MCF 10A (cell line): ENCODE measurements at regions of chr20 and their contacts with region 1.

Region 1: DNA sequence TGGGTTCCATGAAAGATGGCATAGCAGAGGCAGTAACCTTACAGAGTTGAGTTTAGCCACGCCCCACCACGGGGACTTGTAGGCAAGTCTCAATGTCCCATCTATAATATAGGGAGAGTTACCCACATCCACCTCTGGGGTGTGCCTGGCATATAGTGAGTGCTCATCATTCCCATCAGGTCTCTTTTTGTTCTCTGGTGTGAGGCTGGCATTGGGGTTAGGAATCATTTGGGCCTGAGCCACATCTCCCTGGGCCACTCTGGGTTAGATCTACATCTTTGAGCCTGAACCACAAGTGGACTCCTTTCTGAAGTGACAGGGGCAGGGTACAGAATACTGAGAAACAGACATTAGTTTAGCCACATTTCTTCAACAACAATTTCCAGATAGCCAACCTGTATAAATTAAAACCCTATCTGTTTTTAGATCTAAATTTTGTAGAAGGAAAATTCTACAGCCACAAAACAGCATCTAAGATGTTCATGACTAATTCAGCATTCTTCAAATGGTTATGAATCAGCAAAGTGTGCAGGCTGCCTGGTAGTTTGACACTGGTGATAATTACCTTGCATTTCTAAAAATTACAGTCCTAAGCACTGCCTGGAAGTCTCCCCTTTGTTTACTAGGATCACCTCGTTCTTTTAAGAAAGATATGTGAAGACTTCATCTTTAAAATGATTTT is 20.1 kb downstream of the RNF24 start:
- DNase-seq: peak; percentile 17
- H3K4me3 Mint-ChIP-seq: no peak overlapping the region
- H3K27ac Mint-ChIP-seq: peak overlapping the region; percentile 27
- H3K4me1 Mint-ChIP-seq: peaks cover 16% of the 10 kb centered on the region
- H3K27me3 Mint-ChIP-seq: no peaks in the 10 kb centered on the region
- CTCF ChIP-seq: no peak

Region 2: DNA sequence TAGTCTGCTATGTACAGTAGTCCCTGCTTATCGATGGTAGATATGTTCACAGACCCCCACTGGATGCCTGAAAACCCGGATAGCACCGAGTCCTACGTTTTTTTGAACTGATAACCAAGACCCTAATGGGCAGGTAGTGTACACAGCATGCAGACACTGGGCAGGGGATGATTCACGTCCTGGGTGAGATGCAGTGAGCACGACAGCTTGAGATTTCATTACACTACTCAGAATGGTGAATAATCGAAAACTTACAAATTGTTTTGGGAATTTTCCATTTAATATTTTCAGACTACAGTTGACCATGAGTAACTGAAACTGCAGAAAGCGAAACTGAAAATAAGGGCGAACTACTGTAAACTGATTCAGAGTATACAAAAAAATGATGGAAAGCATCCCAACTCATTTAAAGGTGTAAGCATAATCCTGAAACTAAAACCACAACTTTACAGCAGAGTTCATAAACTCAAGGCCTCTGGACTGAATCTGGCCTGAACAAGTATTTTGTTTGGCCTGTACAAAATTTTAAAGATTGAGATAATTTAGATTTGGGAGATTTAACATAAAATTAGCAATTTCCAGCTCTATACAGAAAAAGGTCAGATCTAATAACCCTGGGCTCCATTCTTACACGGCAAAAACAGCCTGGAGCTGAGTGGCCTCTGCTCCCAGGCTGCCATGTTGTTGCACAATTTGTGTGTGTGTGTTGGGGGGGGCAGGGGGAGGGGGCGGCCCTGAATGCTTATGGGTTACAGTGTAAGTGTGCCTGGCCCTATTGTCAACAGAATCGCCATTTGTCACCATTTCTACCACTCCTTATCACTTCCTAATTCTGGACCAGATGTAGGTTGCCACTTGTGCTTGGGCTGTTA is 14.7 kb before region 1 on chr20:
- CTCF ChIA-PET with region 1: interaction called, 6 read pairs
- POLR2A ChIA-PET with region 1: interaction called, 14 read pairs
- intact Hi-C with region 1: no loop called
- DNase-seq: peak; percentile 48
- H3K4me3 Mint-ChIP-seq: peak overlapping the region; percentile 71
- H3K27ac Mint-ChIP-seq: peak overlapping the region; percentile 89
- H3K4me1 Mint-ChIP-seq: peaks cover 4% of the 10 kb centered on the region
- H3K27me3 Mint-ChIP-seq: no peaks in the 10 kb centered on the region
- CTCF ChIP-seq: no peak

Region 3: GRCh38 chr20:4006640-4007039 is 11.4 kb after region 1 on chr20:
- CTCF ChIA-PET with region 1: interaction called, 13 read pairs
- POLR2A ChIA-PET with region 1: interaction called, 10 read pairs
- intact Hi-C with region 1: no loop called
- DNase-seq: no peak
- H3K4me3 Mint-ChIP-seq: no peak overlapping the region
- H3K27ac Mint-ChIP-seq: peak overlapping the region; percentile 46
- H3K4me1 Mint-ChIP-seq: peaks cover 18% of the 10 kb centered on the region
- H3K27me3 Mint-ChIP-seq: no peaks in the 10 kb centered on the region
- CTCF ChIP-seq: no peak